H1 (cell line): ENCODE measurements at regions of chr17 and their contacts with region 1.

Region 1: DNA sequence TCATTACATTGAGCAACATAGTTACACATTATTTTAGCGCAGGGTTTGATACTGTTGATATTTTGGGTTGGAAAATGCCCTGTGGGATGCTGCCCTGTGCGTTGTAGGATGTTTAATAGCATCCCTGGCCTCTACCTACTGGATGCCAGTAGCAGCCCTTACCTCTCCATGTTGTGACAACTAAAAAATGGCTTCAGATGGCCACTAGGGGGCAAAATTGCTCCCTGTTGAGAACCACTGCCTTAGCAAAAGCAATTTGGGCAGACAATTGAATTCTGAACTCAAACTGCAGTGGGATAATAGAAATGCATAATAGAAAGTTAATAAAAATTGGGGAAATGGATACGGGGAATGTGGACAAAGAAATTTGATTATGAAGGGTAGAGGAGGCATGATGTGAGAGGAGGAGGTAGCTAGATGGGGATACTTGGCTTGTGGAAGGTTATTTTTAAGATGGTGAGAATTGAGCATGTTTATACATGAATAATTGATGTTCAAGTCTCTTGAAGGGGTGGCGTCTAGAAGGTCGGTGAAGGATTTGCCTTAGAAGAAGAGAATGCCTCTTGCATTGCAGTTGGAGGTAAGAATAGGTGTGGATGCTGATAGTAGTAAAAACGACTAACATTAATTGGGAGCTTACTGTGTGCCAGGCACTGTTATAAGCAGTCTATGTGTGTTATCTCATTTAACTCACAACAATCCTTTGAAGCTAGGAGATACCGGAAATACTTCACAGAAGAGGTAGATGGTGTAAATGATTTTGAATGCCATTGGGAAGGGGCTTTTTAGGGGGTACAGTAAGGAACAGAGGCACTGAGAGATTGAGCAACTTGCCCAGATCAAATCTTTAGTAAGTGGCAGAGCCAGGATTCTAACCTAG is 19.0 kb downstream of the HEATR9 start:
- DNase-seq: peak; percentile 31 to 58
- H3K4me3 ChIP-seq: no peak overlapping the region
- H3K27ac ChIP-seq: no peak overlapping the region
- H3K4me1 ChIP-seq: no peaks in the 10 kb centered on the region
- H3K27me3 ChIP-seq: no peaks in the 10 kb centered on the region
- CTCF ChIP-seq: peak; percentile 12 to 81 (median 65)
- EP300 ChIP-seq: no peak
- POLR2A ChIP-seq: no peak
- RAD21 ChIP-seq: peak; percentile 64 to 77

Region 2: GRCh38 chr17:35865412-35866340 is 16.0 kb after region 1 on chr17:
- CTCF ChIA-PET with region 1: interaction called, 32 read pairs
- POLR2A ChIA-PET with region 1: interaction called, 13 read pairs
- DNase-seq: no peak
- H3K4me3 ChIP-seq: no peak overlapping the region
- H3K27ac ChIP-seq: no peak overlapping the region
- H3K4me1 ChIP-seq: no peaks in the 10 kb centered on the region
- H3K27me3 ChIP-seq: no peaks in the 10 kb centered on the region; a peak in 1 of 7 replicates
- CTCF ChIP-seq: no peak
- EP300 ChIP-seq: no peak
- POLR2A ChIP-seq: no peak
- RAD21 ChIP-seq: no peak

Region 3: GRCh38 chr17:35870906-35871819 is 21.5 kb after region 1 on chr17:
- CTCF ChIA-PET with region 1: interaction called, 32 read pairs
- POLR2A ChIA-PET with region 1: no interaction called
- DNase-seq: peak in 1 of 2 experiments; percentile 10
- H3K4me3 ChIP-seq: no peak overlapping the region
- H3K27ac ChIP-seq: no peak overlapping the region
- H3K4me1 ChIP-seq: no peaks in the 10 kb centered on the region; a peak in 1 of 7 replicates
- H3K27me3 ChIP-seq: no peaks in the 10 kb centered on the region
- CTCF ChIP-seq: peak; percentile 19 to 55 (median 33); a peak in 3 of 4 replicates
- EP300 ChIP-seq: no peak
- POLR2A ChIP-seq: no peak
- RAD21 ChIP-seq: peak; percentile 23 to 35

Region 4: GRCh38 chr17:35889818-35890763 is 40.4 kb after region 1 on chr17:
- CTCF ChIA-PET with region 1: no interaction called
- POLR2A ChIA-PET with region 1: no interaction called
- DNase-seq: no peak
- H3K4me3 ChIP-seq: no peak overlapping the region
- H3K27ac ChIP-seq: no peak overlapping the region
- H3K4me1 ChIP-seq: peaks cover 0 to 8% (median 3%) of the 10 kb centered on the region in 4 experiments; a peak in 5 of 7 replicates
- H3K27me3 ChIP-seq: no peaks in the 10 kb centered on the region
- CTCF ChIP-seq: no peak
- EP300 ChIP-seq: no peak
- POLR2A ChIP-seq: no peak
- RAD21 ChIP-seq: no peak